ENCODE measurements at regions of chr6 and their contacts with region 1.

Region 1: GRCh38 chr6:109125504-109125903 is 30.2 kb downstream of the CEP57L1 start:
- DNase-seq: no peak
- H3K4me3 Mint-ChIP-seq: no peak overlapping the region
- H3K27ac Mint-ChIP-seq: no peak overlapping the region
- H3K4me1 Mint-ChIP-seq: peaks cover 9% of the 10 kb centered on the region
- H3K27me3 Mint-ChIP-seq: no peaks in the 10 kb centered on the region

Region 2: GRCh38 chr6:109397020-109397419 is 271.5 kb after region 1 on chr6:
- CTCF ChIA-PET with region 1: interaction called, 10 read pairs
- POLR2A ChIA-PET with region 1: no interaction called
- DNase-seq: no peak
- H3K4me3 Mint-ChIP-seq: no peak overlapping the region
- H3K27ac Mint-ChIP-seq: no peak overlapping the region
- H3K4me1 Mint-ChIP-seq: peaks cover 5% of the 10 kb centered on the region
- H3K27me3 Mint-ChIP-seq: peaks cover 1% of the 10 kb centered on the region

Measured in activated CD4-positive, alpha-beta memory T cell treated with anti-CD3 and anti-CD28 coated beads, Interleukin-2, amount 10 ng/mL, durations not matched to agents 7 days and 5 days (primary cell).